Naive thymus-derived CD4-positive, alpha-beta T cell (primary cell): ENCODE measurements at regions of chr6 and their contacts with region 1.

Region 1: DNA sequence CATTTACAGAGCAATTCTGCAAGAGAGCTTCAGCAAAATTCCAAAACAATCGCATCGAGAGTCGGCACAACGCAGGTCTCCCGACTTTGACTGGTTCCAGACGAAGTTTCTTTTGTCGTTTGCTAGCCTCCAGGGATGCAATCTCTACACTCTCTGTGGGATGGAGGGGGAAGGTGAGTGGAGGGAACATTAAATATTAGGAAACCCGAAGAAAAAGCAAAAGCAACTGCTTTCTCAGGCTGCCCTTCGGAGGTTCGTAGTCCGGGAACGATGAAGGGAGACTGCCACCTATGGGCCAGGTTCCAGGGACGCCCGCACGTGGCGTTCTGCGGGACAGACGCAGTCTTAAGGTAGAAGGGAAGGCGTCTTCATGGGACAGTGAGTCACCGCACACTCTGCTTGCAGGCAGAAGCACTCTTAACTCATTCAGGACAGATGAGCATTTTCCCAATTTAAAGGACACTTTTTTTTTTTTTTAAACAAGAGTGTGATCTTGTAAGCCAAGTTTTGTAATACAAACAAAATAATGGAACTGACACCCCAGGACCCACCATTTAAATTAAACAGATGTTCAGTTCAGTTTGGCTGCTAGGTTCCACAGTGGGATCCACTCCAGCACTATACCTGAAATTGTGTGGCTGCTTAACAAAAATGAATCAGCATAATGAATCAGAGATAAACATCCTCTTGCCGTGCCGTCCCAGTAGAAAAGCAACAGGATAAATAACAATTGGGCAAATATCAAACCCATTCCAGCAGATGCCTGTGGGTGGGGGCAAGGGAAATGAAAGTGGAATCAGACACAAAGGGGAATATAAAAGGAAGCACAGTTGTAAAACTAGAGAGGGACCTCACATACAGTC is 65.8 kb upstream of the ARMC2 start:
- DNase-seq: peak; percentile 56 to 76 (median 71)
- ATAC-seq: peak; percentile 98
- H3K4me3 ChIP-seq: peak overlapping the region; percentile 52
- H3K4me3 Mint-ChIP-seq: peak overlapping the region; percentile 46 to 93 (median 87)
- H3K27ac ChIP-seq: no peak overlapping the region
- H3K27ac Mint-ChIP-seq: peak overlapping the region in 3 of 9 donors; percentile 47 to 64 (median 51)
- H3K4me1 ChIP-seq: no peaks in the 10 kb centered on the region
- H3K4me1 Mint-ChIP-seq: peaks cover 0 to 17% (median 10%) of the 10 kb centered on the region in 7 donors
- H3K27me3 ChIP-seq: no peaks in the 10 kb centered on the region
- H3K27me3 Mint-ChIP-seq: peaks cover 0 to 73% (median 5%) of the 10 kb centered on the region in 5 donors

Region 2: DNA sequence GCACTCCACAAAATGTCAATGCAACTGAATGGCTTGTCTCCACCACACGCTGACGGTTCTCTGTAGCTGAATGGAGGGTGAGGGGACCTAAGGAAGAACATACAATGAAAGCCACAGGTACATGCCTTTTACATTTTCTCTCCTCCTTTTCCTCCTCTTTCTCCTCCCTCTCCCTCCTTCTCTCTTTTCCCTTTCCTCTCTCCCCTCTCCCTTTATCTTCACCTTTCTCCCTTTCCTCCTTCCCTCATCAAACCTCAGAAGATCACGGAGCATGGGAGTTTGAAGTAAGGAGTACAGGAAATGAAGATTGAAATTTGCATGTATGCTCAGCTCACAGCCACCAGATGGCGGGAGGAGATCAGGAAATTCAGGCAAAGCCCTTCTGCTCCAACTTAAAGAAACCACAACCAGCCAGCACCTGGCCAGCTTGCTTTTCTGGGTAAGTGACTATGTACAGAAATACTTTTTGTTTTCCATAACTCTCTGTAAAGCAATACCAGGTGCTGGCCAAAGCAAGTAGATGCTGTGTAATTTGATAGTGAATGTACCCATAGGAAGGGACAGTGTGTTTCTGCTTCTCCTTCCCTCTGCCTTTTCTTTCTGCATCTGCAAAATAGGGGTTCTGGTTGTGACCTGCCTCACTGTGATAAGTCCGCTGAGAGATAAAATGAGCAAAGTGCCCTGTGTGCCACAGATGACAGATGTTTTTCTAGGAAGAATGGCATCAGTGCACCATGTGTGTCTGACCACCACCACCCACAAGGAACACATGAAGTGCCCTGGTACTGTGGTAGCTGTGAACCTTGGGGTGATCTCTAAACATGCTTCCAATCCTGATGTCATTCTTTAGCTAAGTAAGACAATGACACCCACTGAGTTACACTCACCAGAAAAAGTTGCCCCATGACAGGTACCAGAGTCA is 240.3 kb before region 1 on chr6:
- CTCF ChIA-PET with region 1: interaction called, 47 read pairs
- POLR2A ChIA-PET with region 1: interaction called, 3 read pairs
- intact Hi-C with region 1: loop called (anchors 1 kb)
- DNase-seq: peak in 8 of 9 donors; percentile 41 to 77 (median 70)
- ATAC-seq: peak; percentile 84
- H3K4me3 ChIP-seq: no peak overlapping the region
- H3K4me3 Mint-ChIP-seq: peak overlapping the region in 7 of 10 donors; percentile 2 to 67 (median 31)
- H3K27ac ChIP-seq: no peak overlapping the region
- H3K27ac Mint-ChIP-seq: peak overlapping the region in 1 of 9 donors; percentile 33
- H3K4me1 ChIP-seq: peaks cover 8 to 11% of the 10 kb centered on the region in 2 donors
- H3K4me1 Mint-ChIP-seq: peaks cover 7 to 18% (median 8%) of the 10 kb centered on the region in 7 donors
- H3K27me3 ChIP-seq: no peaks in the 10 kb centered on the region
- H3K27me3 Mint-ChIP-seq: peaks cover 0 to 52% (median 6%) of the 10 kb centered on the region in 5 donors